GM13977 (cell line): ENCODE measurements at regions of chr6 and their contacts with region 1.

Region 1: DNA sequence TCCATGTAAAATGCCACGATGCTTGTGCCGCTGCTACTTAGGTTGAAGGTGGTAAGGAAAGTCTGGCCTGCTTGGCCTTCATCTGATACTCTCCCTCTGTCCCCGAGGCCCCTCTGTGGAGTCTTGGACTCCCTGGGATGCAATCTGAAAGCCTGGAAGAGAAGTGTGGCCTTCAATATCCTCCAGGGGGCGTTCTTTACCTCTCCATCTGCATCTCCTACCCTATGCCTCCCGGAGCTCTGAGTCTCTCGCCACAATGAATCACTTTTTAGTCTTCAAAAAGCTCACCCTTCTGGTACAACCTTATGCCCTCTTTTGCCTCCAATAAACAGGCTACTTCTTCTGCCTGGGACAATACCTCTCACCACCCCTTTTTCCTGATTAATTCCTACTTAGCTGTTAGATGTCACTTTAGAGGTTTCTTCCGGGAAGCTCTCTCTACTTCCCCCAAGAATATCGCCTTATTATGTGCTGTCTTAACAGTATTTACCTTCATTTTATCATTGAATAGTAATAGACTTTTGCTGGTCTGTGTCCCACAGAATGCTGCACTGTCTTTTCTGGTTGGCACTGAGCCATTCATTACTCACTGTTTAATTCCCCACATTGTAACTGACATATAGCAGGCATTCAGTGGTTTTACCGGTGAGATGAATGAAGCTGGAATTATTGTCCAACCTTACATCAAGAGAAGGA is 13.9 kb upstream of the ATG5 start:
- DNase-seq: peak; percentile 56
- CTCF ChIP-seq: peak; percentile 61

Region 2: DNA sequence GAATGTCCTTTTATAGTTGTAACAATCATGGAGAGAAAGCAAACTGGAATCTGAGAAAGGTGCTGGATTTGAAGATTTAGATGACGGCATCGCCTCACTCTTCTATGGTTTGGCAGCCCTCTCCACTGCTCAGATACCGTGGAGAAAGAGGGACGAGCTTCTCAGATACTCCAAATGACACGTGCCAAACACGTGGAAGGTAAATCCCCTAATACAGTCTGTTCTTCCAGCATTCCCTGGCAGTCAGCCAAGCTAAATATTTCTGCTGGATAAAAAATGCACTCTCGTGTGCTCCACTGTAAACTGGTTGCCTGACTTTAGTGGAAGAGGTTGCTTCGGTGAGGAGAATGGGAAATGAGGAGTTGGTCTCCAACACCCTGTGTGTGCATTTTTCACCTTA is 270.0 kb before region 1 on chr6:
- in situ Hi-C with region 1: no loop called
- DNase-seq: no peak
- CTCF ChIP-seq: no peak

Region 3: DNA sequence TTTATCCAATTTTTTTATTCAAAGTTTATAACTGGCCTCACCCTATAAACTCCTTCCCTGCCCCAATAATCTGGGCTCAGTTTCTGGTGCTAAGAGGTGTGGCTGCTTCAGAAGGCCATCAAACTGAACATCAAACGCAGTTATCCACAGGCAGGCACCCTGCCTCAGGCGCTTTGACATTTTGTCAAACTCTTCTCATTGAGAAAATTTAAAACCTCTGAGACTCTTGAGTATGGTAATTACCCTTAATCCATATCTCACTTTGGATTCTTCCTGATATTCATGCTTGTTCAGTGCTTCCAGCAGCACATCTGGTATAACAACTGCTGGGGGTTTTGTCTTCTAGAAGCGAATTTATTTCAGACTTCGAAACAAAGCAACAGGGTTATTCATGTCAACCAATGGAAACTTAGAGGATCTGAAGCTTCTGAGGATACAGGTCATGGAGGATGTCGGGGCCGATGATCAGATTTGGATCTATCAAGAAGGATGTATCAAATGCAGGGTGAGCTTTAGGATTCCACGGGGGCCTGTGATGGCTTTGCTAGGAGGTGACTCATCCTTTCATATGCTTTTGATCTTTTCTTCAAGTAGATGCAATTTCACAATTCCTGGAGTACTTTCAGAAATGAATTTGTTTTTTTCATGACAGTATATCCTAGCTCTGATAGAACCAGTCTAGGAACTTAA is 221.7 kb after region 1 on chr6:
- in situ Hi-C with region 1: loop called (anchors 10 kb)
- DNase-seq: no peak
- CTCF ChIP-seq: no peak